Activated naive CD4-positive, alpha-beta T cell treated with anti-CD3 and anti-CD28 coated beads for 36 hours (primary cell): ENCODE measurements at regions of chr3 and their contacts with region 1.

Region 1: DNA sequence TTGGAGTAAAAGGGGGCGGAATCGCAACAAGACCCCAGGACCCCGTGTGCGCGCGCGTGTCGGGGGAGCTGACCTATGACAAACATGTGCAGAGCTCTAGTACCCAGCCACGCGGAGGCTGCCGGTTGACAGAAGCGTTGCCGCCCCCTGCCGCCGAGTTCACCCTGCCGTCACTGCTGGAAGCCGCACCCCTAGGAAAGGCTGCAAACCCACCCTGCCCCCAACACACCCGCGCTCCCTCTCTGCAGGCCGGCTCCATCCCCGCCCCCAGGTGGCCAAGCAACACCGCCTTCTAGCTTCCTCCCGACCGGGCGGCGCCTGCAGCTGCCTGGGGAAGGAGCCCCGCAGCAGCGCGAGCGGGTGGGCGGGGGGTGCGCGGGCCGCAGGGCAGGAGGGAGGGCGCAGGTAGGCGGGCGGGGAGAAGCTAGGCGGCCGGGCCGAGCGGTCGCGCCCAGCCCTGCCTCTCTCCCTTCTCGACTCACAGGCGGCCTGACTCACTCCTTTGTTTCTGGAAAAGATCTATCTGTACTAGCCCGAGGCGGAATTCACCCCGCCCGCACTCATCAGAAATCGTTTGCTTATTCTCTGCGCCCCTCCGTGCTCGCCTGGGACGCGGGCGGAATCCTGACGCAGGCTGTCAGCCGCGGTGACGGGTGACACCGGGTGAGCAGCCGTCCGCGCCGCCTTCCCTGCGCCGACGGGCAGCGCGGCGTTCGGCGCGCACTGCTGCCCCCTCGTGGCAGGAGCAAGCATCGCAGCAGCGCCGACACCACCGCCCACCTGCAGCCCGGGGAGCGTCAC is 160.8 kb downstream of the GAP43 start:
- DNase-seq: peak; percentile 92
- H3K4me3 Mint-ChIP-seq: peak overlapping the region; percentile 90
- H3K27ac Mint-ChIP-seq: peak overlapping the region; percentile 96
- H3K4me1 Mint-ChIP-seq: peaks cover 18% of the 10 kb centered on the region
- H3K27me3 Mint-ChIP-seq: no peaks in the 10 kb centered on the region

Region 2: GRCh38 chr3:114827495-114827894 is 956.6 kb before region 1 on chr3:
- CTCF ChIA-PET with region 1: no interaction called
- intact Hi-C with region 1: loop called (anchors 10 kb)
- DNase-seq: peak; percentile 11
- H3K4me3 Mint-ChIP-seq: no peak overlapping the region
- H3K27ac Mint-ChIP-seq: no peak overlapping the region
- H3K4me1 Mint-ChIP-seq: peaks cover 4% of the 10 kb centered on the region
- H3K27me3 Mint-ChIP-seq: no peaks in the 10 kb centered on the region

Region 3: GRCh38 chr3:115092220-115092791 is 691.8 kb before region 1 on chr3:
- CTCF ChIA-PET with region 1: interaction called, 5 read pairs
- intact Hi-C with region 1: loop called (anchors 1 kb)
- DNase-seq: peak; percentile 79
- H3K4me3 Mint-ChIP-seq: no peak overlapping the region
- H3K27ac Mint-ChIP-seq: no peak overlapping the region
- H3K4me1 Mint-ChIP-seq: peaks cover 34% of the 10 kb centered on the region
- H3K27me3 Mint-ChIP-seq: no peaks in the 10 kb centered on the region

Region 4: GRCh38 chr3:115512565-115513415 is 271.3 kb before region 1 on chr3:
- CTCF ChIA-PET with region 1: no interaction called
- intact Hi-C with region 1: loop called (anchors 2 kb)
- DNase-seq: peak; percentile 50
- H3K4me3 Mint-ChIP-seq: peak overlapping the region; percentile 83
- H3K27ac Mint-ChIP-seq: no peak overlapping the region
- H3K4me1 Mint-ChIP-seq: peaks cover 20% of the 10 kb centered on the region
- H3K27me3 Mint-ChIP-seq: peaks cover 33% of the 10 kb centered on the region

Region 5: GRCh38 chr3:115692887-115693524 is 91.1 kb before region 1 on chr3:
- CTCF ChIA-PET with region 1: interaction called, 4 read pairs
- intact Hi-C with region 1: loop called (anchors 1 kb)
- DNase-seq: peak; percentile 86
- H3K4me3 Mint-ChIP-seq: no peak overlapping the region
- H3K27ac Mint-ChIP-seq: no peak overlapping the region
- H3K4me1 Mint-ChIP-seq: peaks cover 2% of the 10 kb centered on the region
- H3K27me3 Mint-ChIP-seq: no peaks in the 10 kb centered on the region

Region 6: GRCh38 chr3:115819785-115820384 is 35.7 kb after region 1 on chr3:
- CTCF ChIA-PET with region 1: interaction called, 18 read pairs
- intact Hi-C with region 1: no loop called
- DNase-seq: peak; percentile 79
- H3K4me3 Mint-ChIP-seq: no peak overlapping the region
- H3K27ac Mint-ChIP-seq: no peak overlapping the region
- H3K4me1 Mint-ChIP-seq: no peaks in the 10 kb centered on the region
- H3K27me3 Mint-ChIP-seq: no peaks in the 10 kb centered on the region